Sigmoid colon (tissue), 7 donors: ENCODE measurements at regions of chr1 and their contacts with region 1.

Region 1: DNA sequence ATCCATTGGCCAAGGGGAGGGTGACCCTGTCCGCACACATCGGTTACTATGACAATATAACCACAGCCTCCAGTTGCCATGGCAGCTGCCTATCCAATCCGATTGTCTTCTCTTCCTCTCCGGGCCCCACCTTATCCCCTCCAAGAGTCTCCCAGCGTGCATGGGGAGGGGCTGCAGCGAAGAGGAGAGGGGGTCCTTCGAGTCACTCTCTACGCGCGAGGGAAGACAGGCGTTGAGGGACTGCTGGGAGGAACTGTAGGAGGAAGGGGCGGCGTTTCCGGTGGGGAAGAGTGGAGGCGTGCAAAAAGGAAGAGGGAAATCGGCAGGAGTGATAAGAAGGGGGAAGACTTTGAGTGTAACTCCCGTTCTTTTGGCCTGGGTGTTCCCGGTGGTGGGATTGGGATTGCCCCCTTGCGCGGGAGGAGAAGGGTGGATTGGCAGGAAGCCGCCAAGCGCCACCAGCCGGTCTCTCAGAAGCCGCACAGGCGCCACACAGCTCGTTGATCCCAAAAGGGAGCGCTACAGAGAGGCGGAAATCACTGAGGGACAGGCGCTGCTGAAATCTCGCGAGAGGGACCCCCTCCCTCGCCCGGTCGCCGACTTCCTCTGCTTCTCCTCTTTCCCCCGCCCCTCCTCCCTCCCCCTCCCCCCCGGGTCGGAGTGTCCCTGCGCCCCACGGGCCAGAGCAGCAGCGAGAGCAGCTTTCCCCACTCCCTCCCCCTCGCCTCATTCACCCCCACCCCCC is 384 bp upstream of the SMG7 start:
- DNase-seq: peak; percentile 99
- H3K4me3 ChIP-seq: peak overlapping the region; percentile 68 to 100 (median 91)
- H3K27ac ChIP-seq: peak overlapping the region; percentile 89 to 96 (median 95)
- H3K4me1 ChIP-seq: peaks cover 0 to 40% (median 31%) of the 10 kb centered on the region in 4 donors
- H3K27me3 ChIP-seq: no peaks in the 10 kb centered on the region
- CTCF ChIP-seq: no peak
- EP300 ChIP-seq: no peak
- POLR2A ChIP-seq: no peak

Region 2: GRCh38 chr1:183281553-183282091 is 190.3 kb before region 1 on chr1:
- intact Hi-C with region 1: loop called (anchors 2 kb)
- DNase-seq: peak; percentile 97
- H3K4me3 ChIP-seq: peak overlapping the region in 2 of 4 donors; percentile 3 to 6
- H3K27ac ChIP-seq: peak overlapping the region; percentile 72 to 84 (median 76)
- H3K4me1 ChIP-seq: peaks cover 0 to 65% (median 46%) of the 10 kb centered on the region in 4 donors
- H3K27me3 ChIP-seq: no peaks in the 10 kb centered on the region
- CTCF ChIP-seq: peak; percentile 89 to 94 (median 93)
- EP300 ChIP-seq: no peak
- POLR2A ChIP-seq: no peak

Region 3: DNA sequence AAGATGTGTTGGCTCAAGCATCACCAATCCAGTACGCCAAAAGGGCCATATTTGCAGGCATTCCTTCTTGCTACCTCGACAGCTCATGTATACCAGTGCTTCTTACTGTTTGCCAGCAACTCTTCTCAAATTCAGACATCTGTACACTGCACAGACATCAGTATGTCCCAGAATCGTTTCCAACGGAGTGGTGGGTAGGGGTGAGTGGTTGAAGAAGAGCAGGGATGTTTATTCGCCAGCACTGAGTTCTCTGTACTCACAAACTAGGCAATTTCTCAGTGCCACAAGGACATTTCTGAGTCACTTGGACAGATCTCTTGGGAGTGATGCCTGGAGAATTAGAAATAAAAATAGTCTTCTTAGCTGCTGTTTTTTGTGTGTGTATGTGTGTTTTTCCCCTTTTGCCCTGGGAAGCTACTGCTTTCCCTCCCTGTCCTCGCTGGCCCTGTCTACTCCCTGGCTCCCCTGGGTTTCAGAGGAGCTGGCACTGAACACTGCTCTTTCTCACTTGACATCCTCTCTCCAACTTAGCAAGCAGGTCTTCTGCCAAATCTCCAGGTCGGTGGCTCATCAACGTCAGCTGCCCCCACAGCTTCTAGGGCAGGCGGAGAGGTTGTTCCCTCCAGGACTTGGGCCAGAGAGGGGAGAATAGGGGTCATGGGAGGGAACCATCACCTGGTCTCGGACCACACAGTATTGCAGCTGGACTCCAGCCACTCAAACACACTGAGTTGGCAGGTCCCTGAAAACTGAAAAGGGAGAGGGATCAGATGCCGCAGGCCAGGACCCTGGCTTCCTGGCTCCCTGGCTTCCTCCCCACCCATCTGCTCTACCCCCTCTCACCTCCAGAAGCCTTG is 144.3 kb before region 1 on chr1:
- intact Hi-C with region 1: loop called (anchors 5 kb)
- DNase-seq: peak; percentile 84
- H3K4me3 ChIP-seq: no peak overlapping the region
- H3K27ac ChIP-seq: peak overlapping the region; percentile 77 to 92 (median 88)
- H3K4me1 ChIP-seq: peaks cover 0 to 52% (median 50%) of the 10 kb centered on the region in 4 donors
- H3K27me3 ChIP-seq: no peaks in the 10 kb centered on the region
- CTCF ChIP-seq: no peak
- EP300 ChIP-seq: peak in 3 of 4 donors; percentile 65 to 80 (median 69)
- POLR2A ChIP-seq: no peak

Region 4: DNA sequence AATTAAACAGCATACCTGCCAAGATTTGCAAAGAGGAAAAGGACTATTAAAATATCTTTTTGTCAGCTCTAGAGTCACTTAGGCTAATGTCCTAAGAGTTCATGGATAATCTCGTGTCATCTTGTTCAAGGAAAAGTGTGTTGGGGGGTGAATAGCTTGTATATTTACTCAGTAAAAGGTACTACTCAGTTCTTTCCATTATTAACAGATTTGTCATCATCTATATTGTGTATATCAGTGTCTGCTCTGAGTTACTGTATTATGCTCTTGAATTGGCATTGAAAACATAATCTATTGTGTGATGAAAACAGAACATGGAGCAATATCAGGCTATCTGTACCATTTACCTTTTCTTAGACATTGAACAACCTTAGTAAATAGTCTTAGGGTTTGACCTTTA is 42.3 kb after region 1 on chr1:
- intact Hi-C with region 1: loop called (anchors 5 kb)
- DNase-seq: no peak
- H3K4me3 ChIP-seq: no peak overlapping the region
- H3K27ac ChIP-seq: peak overlapping the region in 1 of 4 donors; percentile 30
- H3K4me1 ChIP-seq: peaks cover 0 to 22% (median 15%) of the 10 kb centered on the region in 4 donors
- H3K27me3 ChIP-seq: no peaks in the 10 kb centered on the region
- CTCF ChIP-seq: no peak
- EP300 ChIP-seq: no peak
- POLR2A ChIP-seq: no peak

Region 5: GRCh38 chr1:183543619-183544204 is 71.8 kb after region 1 on chr1:
- intact Hi-C with region 1: loop called (anchors 1 kb)
- DNase-seq: no peak
- H3K4me3 ChIP-seq: no peak overlapping the region
- H3K27ac ChIP-seq: no peak overlapping the region
- H3K4me1 ChIP-seq: peaks cover 0 to 8% (median 3%) of the 10 kb centered on the region in 4 donors
- H3K27me3 ChIP-seq: no peaks in the 10 kb centered on the region
- CTCF ChIP-seq: peak; percentile 20 to 68 (median 59)
- EP300 ChIP-seq: no peak
- POLR2A ChIP-seq: no peak

Region 6: GRCh38 chr1:183635606-183636333 is 163.9 kb after region 1 on chr1 and contains the start of gene ARPC5:
- intact Hi-C with region 1: loop called (anchors 5 kb)
- DNase-seq: peak; percentile 98
- H3K4me3 ChIP-seq: peak within 1 kb of the TSS; percentile 65 to 96 (median 86)
- H3K27ac ChIP-seq: peak within 1 kb of the TSS; percentile 96 to 99 (median 98)
- H3K4me1 ChIP-seq: peaks cover 0 to 34% (median 28%) of the 10 kb centered on the region in 4 donors
- H3K27me3 ChIP-seq: no peaks in the 10 kb centered on the region
- CTCF ChIP-seq: no peak
- EP300 ChIP-seq: peak in 1 of 4 donors; percentile 3
- POLR2A ChIP-seq: peak; percentile 95 to 98
- total RNA-seq, gene ARPC5: 57.3 to 95.6 (median 90.1) TPM